Posterior cingulate gyrus (tissue), 11 donors: ENCODE measurements at regions of chr10 and their contacts with region 1.

Region 1: DNA sequence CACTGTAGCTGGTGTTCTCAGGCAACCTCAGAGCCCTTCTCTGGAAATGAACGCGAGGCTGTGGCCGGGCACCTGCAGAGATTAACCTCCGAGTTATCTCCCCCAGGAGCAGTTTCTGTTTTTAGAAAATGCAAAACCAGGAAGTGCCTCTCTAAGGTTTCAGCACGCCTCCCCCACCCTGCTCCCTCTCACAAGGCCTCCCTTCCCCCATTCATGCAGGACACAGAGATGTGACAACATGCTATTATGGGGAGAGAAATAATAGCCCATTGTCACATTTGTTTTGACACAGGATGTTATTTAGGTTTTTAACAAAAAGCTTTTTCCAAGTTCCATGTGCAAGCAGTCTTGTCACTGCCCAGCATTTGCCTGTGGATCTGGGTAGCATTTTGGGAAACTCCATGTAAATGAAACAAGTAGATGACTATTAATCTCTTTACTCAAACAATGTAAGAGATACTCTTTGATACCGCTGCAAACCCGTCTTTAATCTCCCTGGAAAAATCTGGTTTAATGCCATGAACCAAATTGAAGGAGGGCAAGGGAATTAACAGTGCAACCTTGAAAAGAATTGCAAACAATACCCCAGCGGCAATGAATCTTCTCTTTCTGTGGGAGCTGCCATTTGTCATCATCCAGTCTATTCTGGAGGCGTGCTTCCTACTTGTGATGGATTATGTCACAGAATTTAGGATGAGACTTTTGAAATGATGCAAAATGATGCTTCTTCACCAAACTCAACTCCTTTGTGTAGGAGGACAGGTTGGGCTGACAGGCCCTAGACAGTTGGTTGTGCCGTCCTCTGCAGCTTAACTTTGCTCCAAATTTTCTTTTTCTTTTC is 86.5 kb upstream of the NMT2 start:
- DNase-seq: peak in 4 of 10 donors; percentile 39 to 89 (median 58)

Region 2: DNA sequence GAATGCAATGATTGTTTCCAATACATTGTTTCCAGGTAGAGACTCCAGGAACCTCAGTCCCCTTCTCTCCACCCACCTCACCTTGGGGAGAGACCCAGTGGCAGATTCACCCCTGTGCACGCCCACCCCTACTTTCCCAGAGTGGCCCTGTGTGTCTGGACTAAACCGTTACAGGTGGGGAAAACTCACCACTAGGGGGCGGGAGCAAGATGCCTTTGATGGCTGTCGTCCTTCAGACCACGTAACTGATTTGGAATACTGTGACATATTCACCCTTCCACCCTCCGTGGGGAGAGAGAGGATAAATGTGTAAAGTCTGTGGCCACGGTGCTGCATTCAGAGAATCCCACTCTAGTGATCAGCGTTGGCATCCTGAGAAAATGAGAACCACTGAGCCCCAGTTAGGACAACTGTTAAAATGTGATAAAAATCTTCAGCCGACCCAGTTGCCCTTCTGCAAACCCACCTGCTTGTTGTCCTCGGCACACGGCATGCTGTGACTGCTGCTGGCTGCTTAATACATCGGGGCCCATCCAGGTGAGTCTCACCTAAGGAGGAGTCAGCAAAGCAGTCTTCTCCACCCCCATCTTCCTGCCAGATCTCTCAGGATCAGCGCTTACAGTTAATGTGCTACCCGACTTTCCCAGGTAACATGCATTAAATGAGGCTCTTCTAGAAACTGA is 45.1 kb before region 1 on chr10:
- intact Hi-C with region 1: loop called (anchors 5 kb)
- DNase-seq: peak; percentile 64 to 96 (median 88)

Region 3: DNA sequence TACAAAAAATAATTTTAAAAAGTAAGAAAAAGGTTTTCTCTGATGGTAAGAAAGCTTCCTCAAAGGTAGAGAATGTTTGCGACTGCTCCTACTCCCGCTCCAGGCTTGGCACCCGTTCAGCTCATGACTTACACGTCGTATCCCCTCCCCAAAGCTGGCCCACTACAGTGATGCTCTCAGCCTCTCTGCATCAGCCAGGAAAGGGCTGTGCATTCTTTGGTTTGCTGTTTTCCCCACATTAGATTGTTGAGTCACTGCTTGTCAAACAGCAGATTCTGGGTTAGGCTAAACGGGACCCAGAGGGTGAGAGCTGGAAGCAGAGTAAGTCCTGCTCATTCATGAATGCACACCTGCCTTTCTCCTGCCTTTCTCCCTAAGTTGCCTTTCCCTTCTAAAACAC is 31.9 kb before region 1 on chr10:
- intact Hi-C with region 1: no loop called
- DNase-seq: peak in 1 of 10 donors; percentile 63

Region 4: DNA sequence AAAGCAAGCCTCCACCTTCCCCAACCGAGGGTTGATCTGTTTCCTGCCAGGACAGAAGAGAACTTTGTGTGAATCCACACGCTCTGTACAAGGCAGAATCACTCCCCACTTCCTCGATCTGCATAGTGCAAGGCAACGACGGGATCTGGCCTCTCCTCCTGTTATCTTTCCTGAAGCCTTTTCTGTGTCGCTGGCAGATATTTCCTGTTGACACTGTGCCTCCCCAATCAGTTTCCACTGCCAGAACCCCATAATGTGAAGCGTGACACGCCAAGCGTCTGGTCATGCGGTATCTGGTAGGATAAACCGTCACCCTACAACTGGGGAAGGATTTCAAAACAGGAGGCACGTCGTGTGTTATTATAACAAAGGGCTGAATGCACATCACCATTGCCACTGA is 58.8 kb after region 1 on chr10:
- intact Hi-C with region 1: loop called (anchors 1 kb)
- DNase-seq: peak in 7 of 10 donors; percentile 25 to 90 (median 55)